GM13977 (cell line): ENCODE measurements at regions of chr11 and their contacts with region 1.

Region 1: GRCh38 chr11:88543902-88544655 is 206.5 kb upstream of the CTSC start:
- DNase-seq: peak; percentile 59
- CTCF ChIP-seq: peak; percentile 93

Region 2: DNA sequence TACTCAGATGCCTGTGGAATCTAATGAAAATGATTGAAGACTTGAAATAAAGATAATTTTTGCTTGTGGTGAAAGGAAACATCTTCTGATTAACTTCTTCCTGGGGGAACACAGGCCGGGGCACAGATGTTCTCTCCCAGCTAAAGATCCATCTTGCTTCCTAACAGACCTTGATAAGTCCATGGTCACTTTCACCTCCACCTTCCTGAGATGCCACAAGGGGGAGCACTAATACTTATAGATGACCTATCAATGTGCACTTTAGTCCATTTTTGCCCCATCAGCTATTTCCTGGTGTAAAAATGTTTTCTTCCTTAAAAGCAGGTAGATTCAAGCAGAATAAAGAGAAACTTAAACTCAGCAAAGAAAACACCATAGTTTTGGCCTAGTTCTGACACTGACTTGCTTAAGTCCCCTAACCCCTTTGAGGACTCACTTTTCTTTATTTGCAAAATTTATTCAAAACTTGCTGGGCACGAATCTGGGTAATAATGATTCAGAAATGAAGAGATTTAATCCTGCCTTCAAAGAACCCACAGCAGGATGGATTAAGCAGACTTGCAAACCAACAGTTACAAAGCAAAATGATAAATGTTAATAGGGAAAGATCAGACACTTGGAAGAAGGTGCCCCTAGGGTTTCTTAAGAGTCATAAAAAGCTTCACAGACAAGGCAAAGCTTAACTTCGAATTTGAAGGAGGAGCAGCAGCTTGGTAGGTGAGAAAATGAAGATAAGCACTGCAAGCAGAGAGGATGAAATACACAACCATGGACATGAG is 527.5 kb before region 1 on chr11:
- in situ Hi-C with region 1: loop called (anchors 25 kb)
- DNase-seq: peak; percentile 22
- CTCF ChIP-seq: peak; percentile 83

Region 3: GRCh38 chr11:88103337-88104206 is 440.5 kb before region 1 on chr11:
- in situ Hi-C with region 1: loop called (anchors 25 kb)
- DNase-seq: peak; percentile 16
- CTCF ChIP-seq: peak; percentile 65